ENCODE measurements at regions of chr15 and their contacts with region 1.

Region 1: DNA sequence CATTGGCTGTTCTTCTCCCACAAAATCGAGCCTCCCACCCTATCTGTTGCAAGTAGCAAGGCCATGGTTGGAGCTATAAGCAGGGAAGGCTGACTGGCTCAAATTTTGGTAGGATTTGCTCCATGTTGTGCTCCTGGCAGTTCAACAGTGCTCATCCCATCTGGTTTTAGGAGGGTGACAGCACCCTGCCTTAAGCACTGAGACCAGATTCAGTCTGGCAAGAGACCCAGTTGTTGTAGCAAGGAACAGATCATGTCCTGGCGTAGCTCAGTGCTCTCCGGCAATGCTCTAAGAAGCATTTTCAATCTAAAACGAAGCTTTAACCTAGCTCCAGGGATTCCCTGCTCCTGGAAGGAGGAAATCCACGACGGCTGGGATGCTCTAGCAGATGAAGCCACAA is 91.2 kb downstream of the RGMA start:
- DNase-seq: no peak
- ATAC-seq: no peak
- H3K4me3 Mint-ChIP-seq: no peak overlapping the region
- H3K27ac Mint-ChIP-seq: no peak overlapping the region
- H3K4me1 Mint-ChIP-seq: no peaks in the 10 kb centered on the region
- H3K27me3 Mint-ChIP-seq: no peaks in the 10 kb centered on the region
- CTCF ChIP-seq: no peak

Region 2: GRCh38 chr15:92958105-92958504 is 39.7 kb before region 1 on chr15:
- CTCF ChIA-PET with region 1: no interaction called
- POLR2A ChIA-PET with region 1: no interaction called
- intact Hi-C with region 1: loop called (anchors 5 kb)
- DNase-seq: no peak
- ATAC-seq: peak; percentile 25
- H3K4me3 Mint-ChIP-seq: no peak overlapping the region
- H3K27ac Mint-ChIP-seq: peak overlapping the region; percentile 36
- H3K4me1 Mint-ChIP-seq: peaks cover 10% of the 10 kb centered on the region
- H3K27me3 Mint-ChIP-seq: no peaks in the 10 kb centered on the region
- CTCF ChIP-seq: no peak

Region 3: DNA sequence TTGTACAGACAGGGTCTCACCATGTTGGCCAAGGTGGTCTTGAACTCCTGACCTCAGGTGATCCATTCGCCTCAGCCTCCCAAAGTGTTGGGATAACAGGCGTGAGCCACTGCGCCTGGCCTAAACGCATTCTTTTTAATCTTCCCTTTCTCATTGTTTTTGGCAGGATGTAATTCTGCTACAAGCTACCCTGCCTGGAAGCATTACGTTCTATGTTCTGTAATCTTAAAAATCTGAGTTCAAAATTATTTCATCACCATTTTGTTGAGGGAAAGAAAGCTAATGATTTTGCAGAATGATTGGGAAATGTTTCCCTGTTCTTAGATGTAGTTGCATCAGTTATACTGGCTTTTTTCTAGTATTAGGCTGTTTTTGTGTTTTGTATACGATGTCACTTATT is 19.7 kb after region 1 on chr15:
- CTCF ChIA-PET with region 1: no interaction called
- POLR2A ChIA-PET with region 1: no interaction called
- intact Hi-C with region 1: no loop called
- DNase-seq: no peak
- ATAC-seq: no peak
- H3K4me3 Mint-ChIP-seq: no peak overlapping the region
- H3K27ac Mint-ChIP-seq: no peak overlapping the region
- H3K4me1 Mint-ChIP-seq: peaks cover 15% of the 10 kb centered on the region
- H3K27me3 Mint-ChIP-seq: no peaks in the 10 kb centered on the region
- CTCF ChIP-seq: no peak